Spleen (tissue), 13 donors: ENCODE measurements at regions of chr11 and their contacts with region 1.

Region 1: GRCh38 chr11:12893787-12894672 is 115.1 kb upstream of the RASSF10 start:
- DNase-seq: no peak
- H3K4me3 ChIP-seq: no peak overlapping the region
- H3K27ac ChIP-seq: no peak overlapping the region
- H3K4me1 ChIP-seq: peaks cover 0 to 9% (median 2%) of the 10 kb centered on the region in 6 donors
- H3K27me3 ChIP-seq: peaks cover 0 to 5% (median 0%) of the 10 kb centered on the region in 7 donors
- CTCF ChIP-seq: peak; percentile 51 to 90 (median 78)
- POLR2A ChIP-seq: no peak

Region 2: GRCh38 chr11:12331239-12331874 is 562.7 kb before region 1 on chr11:
- intact Hi-C with region 1: loop called (anchors 5 kb)
- DNase-seq: no peak
- H3K4me3 ChIP-seq: no peak overlapping the region
- H3K27ac ChIP-seq: no peak overlapping the region
- H3K4me1 ChIP-seq: peaks cover 0 to 7% (median 2%) of the 10 kb centered on the region in 6 donors
- H3K27me3 ChIP-seq: no peaks in the 10 kb centered on the region
- CTCF ChIP-seq: peak in 10 of 11 experiments; percentile 36 to 74 (median 67)
- POLR2A ChIP-seq: no peak

Region 3: DNA sequence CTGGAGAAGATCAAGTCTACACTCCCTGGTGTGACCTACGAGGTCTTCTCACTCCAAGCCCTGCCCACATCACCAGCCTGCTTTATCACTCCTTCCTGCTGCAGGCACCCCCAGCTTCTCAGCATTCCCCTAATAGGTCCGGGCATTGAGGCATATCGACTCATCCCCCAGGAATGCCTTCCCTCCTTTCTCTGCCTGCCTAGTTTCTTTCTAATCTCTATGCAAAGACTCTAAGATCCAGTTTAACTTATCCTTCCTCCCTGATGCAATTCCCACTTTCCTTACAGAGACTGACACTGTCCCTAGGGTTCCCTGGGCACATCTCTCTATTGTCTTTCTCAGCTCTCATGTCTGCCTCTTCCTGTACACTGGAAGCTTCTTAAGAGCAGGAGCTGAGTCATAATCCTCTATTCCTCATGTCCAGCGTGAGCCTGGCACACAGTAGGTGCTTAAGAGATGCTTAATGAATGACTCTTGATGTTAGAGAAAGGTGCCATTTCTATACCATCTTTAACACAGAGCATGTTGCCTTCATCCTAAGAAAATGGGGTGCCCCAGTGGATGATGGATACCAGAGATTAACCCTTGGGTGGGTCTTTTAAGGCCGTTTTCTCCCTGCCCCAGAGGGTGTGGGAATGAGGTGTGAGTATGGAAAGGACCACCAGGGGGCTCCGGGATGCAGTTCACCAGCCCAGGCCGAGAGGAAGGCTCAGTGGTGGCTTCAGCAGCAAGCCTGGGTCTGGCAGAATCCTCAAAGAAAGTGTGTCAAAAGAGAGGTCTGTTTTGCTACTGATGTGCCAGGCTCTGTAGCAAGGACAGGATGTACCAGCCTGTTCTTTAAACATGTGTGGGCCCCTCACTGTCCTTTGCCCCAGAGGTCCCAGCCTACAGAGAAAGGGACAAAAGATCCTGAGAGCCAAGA is 482.0 kb before region 1 on chr11:
- intact Hi-C with region 1: loop called (anchors 5 kb)
- DNase-seq: no peak
- H3K4me3 ChIP-seq: no peak overlapping the region
- H3K27ac ChIP-seq: peak overlapping the region in 5 of 8 donors; percentile 20 to 63 (median 59)
- H3K4me1 ChIP-seq: peaks cover 0 to 12% (median 3%) of the 10 kb centered on the region in 6 donors
- H3K27me3 ChIP-seq: no peaks in the 10 kb centered on the region
- CTCF ChIP-seq: peak in 10 of 11 experiments; percentile 23 to 66 (median 52)
- POLR2A ChIP-seq: no peak

Region 4: DNA sequence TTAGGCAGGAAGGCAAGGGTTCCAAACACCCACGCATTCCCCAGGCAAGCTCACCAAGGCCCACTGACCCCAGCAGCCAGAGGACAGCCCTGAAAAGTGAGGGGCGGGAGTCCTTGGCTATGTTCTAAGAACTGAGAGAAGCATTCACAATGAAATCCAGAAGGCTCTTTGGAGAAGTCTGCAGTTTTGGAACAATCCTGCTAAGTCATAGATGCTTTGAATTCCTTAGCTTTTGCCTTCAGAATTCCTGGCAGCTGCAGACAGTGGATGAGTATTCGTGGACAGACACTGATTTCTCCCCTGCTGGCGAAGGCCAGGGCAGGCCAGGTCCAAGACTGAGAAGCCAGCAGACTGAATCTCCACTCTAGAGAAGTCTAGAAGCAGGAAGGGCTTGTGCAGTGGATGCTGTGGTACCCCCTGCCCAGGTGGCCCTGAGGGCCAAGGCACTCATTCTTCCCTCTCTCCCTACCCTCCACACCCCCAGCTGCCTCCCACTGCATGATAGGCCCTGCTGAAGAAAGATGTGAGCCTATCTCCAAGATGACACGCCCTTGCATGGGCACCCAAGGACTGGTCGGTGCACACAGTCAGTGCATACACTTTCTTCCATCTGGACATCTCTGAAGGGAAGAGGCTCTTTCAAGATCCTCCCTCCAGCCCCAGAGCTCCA is 353.0 kb before region 1 on chr11:
- intact Hi-C with region 1: no loop called
- DNase-seq: no peak
- H3K4me3 ChIP-seq: no peak overlapping the region
- H3K27ac ChIP-seq: peak overlapping the region in 5 of 8 donors; percentile 10 to 38 (median 22)
- H3K4me1 ChIP-seq: peaks cover 0 to 4% (median 0%) of the 10 kb centered on the region in 6 donors
- H3K27me3 ChIP-seq: peaks cover 0 to 4% (median 0%) of the 10 kb centered on the region in 7 donors
- CTCF ChIP-seq: no peak
- POLR2A ChIP-seq: no peak

Region 5: DNA sequence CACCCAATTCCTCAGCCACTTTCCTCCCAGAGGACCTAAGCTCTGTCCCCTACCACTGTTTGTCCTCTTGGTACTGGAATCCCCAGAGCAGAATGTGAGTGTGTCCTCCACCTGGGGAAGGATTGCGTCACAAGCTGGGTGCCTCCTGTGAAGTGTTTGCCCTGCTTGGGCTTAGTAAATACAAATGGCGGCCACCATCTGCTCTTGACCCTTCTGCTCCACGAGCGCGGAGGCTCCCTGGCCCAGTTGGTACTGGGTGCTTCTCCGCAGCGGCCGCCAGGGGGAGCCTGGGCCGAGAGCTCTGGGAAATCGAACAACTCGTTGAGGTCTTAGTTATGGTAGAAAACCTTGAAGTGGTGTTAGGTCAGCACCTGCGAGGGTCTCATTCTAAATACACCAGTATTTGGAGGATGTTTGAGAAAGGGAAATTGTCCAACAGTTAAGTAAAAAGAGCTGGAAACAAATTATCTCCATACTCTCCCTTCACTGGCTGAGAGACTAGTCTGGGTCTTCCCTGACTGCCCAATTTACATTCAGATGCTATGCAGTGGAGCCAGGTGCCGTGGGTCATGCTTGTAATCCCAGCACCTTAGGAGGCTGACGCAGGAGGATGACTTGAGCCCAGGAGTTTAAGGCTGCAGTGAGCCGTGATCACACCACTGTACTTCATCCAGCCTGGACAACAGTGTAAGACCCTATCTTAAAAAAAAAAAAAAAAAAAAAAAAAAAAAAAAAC is 294.5 kb before region 1 on chr11:
- intact Hi-C with region 1: loop called (anchors 10 kb)
- DNase-seq: peak; percentile 81
- H3K4me3 ChIP-seq: no peak overlapping the region
- H3K27ac ChIP-seq: no peak overlapping the region
- H3K4me1 ChIP-seq: peaks cover 0 to 15% (median 0%) of the 10 kb centered on the region in 6 donors
- H3K27me3 ChIP-seq: no peaks in the 10 kb centered on the region
- CTCF ChIP-seq: peak; percentile 14 to 80 (median 57)
- POLR2A ChIP-seq: no peak